Mucosa of descending colon (tissue), 3 donors: ENCODE measurements at regions of chr12 and their contacts with region 1.

Region 1: DNA sequence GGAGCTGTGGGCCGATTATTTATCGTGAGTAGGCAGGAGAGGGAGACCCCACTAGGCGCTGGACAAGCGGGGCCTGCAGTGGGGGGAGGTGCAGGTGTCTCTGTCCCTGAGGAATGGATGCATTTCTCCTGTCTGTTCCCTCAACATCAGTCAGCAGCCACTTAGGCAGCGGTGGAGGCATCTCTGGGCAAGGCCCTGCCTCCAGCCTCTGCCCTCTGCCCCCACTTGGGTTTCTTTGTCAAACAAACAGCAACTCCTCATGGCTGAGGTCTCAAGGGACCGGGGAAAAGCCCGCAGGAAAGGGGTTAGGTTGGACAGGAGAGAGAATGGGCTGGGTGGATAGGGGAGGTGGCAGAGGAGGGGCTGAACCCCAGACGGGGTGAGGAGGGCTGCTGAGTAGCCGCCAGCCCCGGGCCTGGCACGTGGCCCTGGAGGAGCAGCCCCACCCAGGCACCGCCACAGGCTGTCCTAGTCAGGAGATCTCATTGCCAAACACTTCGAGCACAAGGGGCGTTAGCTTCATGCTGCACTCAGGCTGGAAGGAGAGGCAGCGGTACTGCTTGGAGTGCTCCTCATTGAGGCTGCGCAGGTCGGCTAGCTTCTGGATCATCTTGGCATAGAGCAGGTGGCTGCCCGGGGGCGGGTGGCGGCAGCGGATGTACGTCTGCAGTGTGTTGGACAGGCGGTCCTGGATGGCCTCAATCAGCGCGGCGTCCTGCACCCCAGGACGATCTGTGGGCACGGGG is 24.7 kb upstream of the HDAC7 start:
- DNase-seq: peak in 1 of 3 donors; percentile 49
- ATAC-seq: peak; percentile 28
- H3K4me3 ChIP-seq: no peak overlapping the region
- H3K4me1 ChIP-seq: no peaks in the 10 kb centered on the region
- CTCF ChIP-seq: no peak

Region 2: DNA sequence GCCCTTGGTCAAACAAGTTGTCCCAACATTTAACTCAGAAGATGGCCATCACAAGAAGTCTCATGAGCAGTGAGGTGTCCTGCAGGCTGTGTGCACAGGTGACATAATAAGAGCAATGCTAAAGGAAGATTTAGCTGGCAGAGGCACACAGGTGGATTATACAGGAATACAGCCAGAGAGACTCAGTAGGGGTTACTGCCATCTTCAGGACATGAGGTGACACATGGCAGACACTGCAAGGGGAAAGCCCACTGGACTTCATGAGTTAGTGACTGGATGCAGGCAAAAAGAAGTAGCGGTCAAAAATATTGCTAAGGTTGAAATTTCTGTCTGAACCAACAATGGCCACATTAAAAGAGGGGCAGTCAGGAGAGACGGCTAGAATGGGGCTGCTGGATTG is 186.9 kb before region 1 on chr12:
- intact Hi-C with region 1: no loop called
- DNase-seq: no peak
- ATAC-seq: no peak
- H3K4me3 ChIP-seq: no peak overlapping the region
- H3K4me1 ChIP-seq: no peaks in the 10 kb centered on the region
- CTCF ChIP-seq: no peak

Region 3: GRCh38 chr12:47797441-47797840 is 47.0 kb before region 1 on chr12:
- intact Hi-C with region 1: loop called in 1 of 2 experiments (anchors 5 kb)
- DNase-seq: peak in 1 of 3 donors; percentile 47
- ATAC-seq: peak; percentile 46
- H3K4me3 ChIP-seq: no peak overlapping the region
- H3K4me1 ChIP-seq: peaks cover 3% of the 10 kb centered on the region
- CTCF ChIP-seq: no peak